ENCODE measurements at regions of chr5 and their contacts with region 1.

Region 1: GRCh38 chr5:173615884-173616576 is 420 bp downstream of the BOD1 start:
- DNase-seq: peak; percentile 65
- H3K4me3 Mint-ChIP-seq: peak overlapping the region; percentile 96
- H3K27ac Mint-ChIP-seq: peak overlapping the region; percentile 88
- H3K4me1 Mint-ChIP-seq: peaks cover 37% of the 10 kb centered on the region
- H3K27me3 Mint-ChIP-seq: no peaks in the 10 kb centered on the region

Region 2: DNA sequence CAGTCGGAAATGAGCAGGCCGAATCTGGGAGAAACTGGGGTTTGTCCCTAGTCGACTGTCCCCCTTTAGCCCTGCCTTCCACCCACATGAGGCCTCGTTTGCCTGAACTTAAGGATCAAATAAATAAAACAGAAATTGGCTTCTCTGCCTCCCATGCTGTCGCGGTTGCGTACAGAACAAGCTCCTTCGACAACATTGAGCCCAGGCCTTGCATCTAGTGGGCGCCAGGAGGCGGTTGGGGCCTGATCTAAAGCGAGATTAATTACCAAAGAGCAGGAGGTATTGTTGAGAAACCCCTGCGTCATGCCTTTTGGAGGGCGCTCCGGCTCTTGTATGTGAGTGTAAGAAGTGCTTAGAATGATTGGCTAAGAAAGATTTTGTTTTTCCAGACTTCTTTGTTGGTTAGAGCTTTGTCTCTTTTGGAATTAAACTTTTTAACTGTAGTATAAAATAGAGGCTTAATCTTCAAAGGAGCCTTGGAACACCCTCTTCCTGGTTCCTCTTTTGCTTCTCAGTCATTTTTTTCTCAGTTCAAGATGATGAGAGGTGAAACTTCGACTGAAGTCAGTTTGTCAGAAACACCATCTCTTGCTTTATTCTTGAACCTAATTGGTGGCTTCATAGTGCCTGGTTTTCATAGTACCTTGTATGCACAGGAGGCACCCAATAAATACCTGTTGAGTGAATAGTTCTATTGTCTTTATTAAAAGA is 631.6 kb before region 1 on chr5:
- intact Hi-C with region 1: loop called (anchors 5 kb)
- DNase-seq: peak; percentile 60
- H3K4me3 Mint-ChIP-seq: peak overlapping the region; percentile 96
- H3K27ac Mint-ChIP-seq: peak overlapping the region; percentile 98
- H3K4me1 Mint-ChIP-seq: peaks cover 16% of the 10 kb centered on the region
- H3K27me3 Mint-ChIP-seq: no peaks in the 10 kb centered on the region

Region 3: DNA sequence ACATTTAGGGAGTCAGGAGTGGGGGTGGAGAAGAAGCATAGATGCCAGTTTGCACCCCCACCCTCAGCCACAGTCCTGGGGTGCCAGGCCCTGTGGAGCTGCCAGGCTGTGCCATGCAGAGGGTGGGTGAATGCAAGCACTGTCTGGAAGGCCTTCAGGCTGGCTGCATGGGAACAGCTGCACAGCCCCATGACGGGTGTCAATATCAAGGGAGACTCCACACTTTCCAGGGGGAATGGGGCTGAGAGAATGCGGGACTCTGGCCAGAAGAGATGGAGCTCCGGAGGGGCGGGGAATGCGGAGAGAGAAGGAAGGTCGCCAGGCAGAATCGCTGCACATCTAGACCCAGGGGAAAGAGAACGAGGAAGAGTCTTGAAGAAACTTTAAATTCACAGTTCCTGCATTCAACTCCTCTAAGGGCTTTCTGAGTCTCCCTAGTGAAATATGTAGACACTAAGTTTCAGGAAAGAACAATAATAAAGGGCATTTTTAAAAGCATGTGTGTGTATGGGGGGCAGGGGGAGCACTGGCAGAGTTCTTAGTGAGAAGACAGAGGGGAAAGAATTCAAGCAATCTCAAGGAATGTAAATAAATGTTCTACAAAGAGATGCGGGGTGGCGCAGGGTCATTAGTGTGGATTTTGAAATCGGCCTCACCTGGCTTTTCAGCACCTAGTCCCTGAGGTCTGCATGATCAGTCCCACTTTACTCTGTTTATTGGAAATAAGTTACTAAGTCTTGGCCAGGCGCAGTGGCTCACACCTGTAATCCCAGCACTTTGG is 58.7 kb before region 1 on chr5:
- intact Hi-C with region 1: no loop called
- DNase-seq: no peak
- H3K4me3 Mint-ChIP-seq: no peak overlapping the region
- H3K27ac Mint-ChIP-seq: no peak overlapping the region
- H3K4me1 Mint-ChIP-seq: no peaks in the 10 kb centered on the region
- H3K27me3 Mint-ChIP-seq: peaks cover 5% of the 10 kb centered on the region

Region 4: DNA sequence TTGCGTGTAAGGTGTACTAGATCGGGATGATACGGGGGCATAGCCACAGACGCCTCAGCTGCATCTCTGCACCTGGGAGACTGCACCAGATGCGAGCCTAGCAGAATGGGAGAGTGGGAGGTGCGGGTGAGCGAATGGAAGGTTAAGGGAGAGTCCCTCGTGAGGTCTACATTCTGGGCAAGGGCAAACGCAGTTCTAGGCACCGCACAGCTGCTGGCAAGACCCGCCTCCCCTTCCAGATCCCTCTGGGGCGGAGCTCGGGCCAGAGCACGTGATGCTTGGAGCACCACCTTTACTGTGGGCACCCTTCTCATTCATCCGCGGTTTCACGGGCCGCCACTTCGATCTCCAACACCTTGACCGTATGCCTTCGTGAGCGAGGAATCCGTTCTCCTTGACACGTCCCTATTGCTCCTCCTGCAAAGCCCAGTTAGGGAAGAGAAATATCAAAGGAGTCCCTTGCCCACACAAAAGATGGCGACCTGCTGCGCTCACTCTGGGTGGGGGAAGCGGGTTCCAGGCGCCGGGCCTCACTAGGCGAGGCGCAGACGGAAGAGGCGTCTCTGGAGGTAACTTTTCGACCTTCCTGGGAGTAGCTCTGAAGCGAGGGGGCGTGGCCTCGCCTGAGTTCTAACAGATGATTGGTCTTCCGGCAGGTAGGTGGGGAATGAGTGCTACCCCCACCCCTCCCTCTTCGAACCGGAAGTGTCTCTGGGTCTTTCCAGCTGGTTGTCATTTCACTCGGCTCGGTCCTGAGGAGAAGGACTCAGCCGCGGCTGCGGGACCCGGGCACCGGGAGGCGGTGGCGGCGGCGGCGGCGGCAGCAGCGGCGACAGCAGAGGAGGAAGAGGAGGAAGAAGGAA is 271.8 kb after region 1 on chr5 and contains the start of gene CPEB4:
- intact Hi-C with region 1: loop called (anchors 1 kb)
- DNase-seq: peak; percentile 96
- H3K4me3 Mint-ChIP-seq: peak within 1 kb of the TSS; percentile 91
- H3K27ac Mint-ChIP-seq: peak within 1 kb of the TSS; percentile 98
- H3K4me1 Mint-ChIP-seq: peaks cover 79% of the 10 kb centered on the region
- H3K27me3 Mint-ChIP-seq: no peaks in the 10 kb centered on the region
- total RNA-seq, gene CPEB4: 9.1 and 14.1 TPM in 2 replicates

Region 5: DNA sequence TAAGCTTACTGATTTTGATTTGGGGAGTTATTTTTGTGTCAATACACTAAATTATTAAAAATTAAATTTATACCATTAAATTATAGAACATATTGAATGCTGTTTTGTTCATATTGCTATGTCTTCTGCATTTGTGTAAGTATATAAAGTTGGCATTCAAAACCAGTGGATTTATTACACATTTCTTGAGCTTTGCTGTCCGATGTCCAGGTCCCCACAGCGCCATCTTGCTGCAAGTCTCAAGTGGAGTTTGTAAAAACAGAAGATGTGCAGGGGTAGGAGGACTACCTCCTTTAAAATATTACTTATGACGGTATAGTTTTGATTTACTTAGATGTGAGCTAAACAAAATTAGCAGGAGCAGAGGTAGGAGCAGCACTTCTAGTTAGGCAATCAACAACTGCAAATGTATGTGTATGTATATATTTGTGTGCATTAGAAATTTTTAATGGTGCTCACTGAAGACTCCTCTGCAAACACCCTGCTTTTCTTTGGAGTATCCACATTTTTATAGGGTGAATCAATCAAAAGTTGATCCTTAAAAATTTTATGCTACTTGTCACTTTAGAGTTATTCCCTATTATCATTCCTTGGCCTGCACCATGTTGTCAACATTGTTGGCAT is 309.5 kb after region 1 on chr5:
- intact Hi-C with region 1: loop called (anchors 1 kb)
- DNase-seq: peak; percentile 22
- H3K4me3 Mint-ChIP-seq: no peak overlapping the region
- H3K27ac Mint-ChIP-seq: no peak overlapping the region
- H3K4me1 Mint-ChIP-seq: peaks cover 7% of the 10 kb centered on the region
- H3K27me3 Mint-ChIP-seq: no peaks in the 10 kb centered on the region

Region 6: GRCh38 chr5:174311531-174312269 is 695.7 kb after region 1 on chr5:
- intact Hi-C with region 1: loop called (anchors 1 kb)
- DNase-seq: peak; percentile 44
- H3K4me3 Mint-ChIP-seq: no peak overlapping the region
- H3K27ac Mint-ChIP-seq: no peak overlapping the region
- H3K4me1 Mint-ChIP-seq: no peaks in the 10 kb centered on the region
- H3K27me3 Mint-ChIP-seq: peaks cover 15% of the 10 kb centered on the region

Region 7: GRCh38 chr5:175478384-175479124 is 1862.5 kb after region 1 on chr5 and contains the start of gene SFXN1:
- intact Hi-C with region 1: loop called (anchors 5 kb)
- DNase-seq: peak; percentile 84
- H3K4me3 Mint-ChIP-seq: peak within 1 kb of the TSS; percentile 96
- H3K27ac Mint-ChIP-seq: peak within 1 kb of the TSS; percentile 84
- H3K4me1 Mint-ChIP-seq: peaks cover 62% of the 10 kb centered on the region
- H3K27me3 Mint-ChIP-seq: peaks cover 12% of the 10 kb centered on the region
- total RNA-seq, gene SFXN1: 394 and 397 TPM in 2 replicates

Measured in activated T-helper 1 cell treated with anti-CD3 and anti-CD28 coated beads, Interleukin-12 subunit alpha, Interleukin-12 subunit beta, Interleukin-2, Interleukin-4 antibody, amounts not matched to agents 30 ng/mL and 10 ng/mL and 1 ng/mL, durations not matched to agents 14 hours and 24 hours and 36 hours (primary cell).